ENCODE measurements at regions of chr10 and their contacts with region 1.

Region 1: DNA sequence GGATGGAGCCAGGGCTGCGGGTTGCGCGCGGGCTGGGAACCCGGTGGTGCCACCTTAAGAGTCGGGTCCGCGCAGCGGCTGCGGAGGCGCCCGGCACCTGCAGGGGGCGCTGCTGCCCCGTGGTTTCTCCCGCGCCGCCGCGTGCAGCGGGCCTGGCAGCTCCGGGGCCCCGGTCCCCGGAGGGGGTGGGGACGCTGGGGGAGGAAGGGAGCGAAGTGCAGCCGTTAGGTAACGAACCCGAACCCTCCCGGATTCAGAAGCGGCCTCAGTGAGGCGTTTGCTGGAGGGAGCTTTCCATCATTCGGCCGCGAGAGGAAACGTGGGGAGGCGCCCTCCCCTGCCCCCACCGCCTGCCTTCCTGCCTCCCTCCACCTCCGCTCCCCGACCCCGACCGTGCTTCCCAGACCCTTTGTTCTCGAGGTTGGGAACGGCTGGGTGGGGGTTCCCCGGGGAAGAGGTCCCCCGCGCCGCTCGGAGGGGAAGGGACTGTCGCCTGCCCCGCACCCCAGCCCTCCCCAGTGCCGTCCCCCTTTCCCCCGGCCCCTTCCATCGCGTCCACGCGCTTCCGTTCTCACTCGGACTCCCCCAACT is 29.6 kb downstream of the SKIDA1 start:
- DNase-seq: peak; percentile 80 to 93
- H3K4me3 ChIP-seq: peak overlapping the region; percentile 72
- H3K4me1 ChIP-seq: peaks cover 5% of the 10 kb centered on the region
- H3K27me3 ChIP-seq: no peaks in the 10 kb centered on the region; the same call in 1 of the 2 replicates

Region 2: DNA sequence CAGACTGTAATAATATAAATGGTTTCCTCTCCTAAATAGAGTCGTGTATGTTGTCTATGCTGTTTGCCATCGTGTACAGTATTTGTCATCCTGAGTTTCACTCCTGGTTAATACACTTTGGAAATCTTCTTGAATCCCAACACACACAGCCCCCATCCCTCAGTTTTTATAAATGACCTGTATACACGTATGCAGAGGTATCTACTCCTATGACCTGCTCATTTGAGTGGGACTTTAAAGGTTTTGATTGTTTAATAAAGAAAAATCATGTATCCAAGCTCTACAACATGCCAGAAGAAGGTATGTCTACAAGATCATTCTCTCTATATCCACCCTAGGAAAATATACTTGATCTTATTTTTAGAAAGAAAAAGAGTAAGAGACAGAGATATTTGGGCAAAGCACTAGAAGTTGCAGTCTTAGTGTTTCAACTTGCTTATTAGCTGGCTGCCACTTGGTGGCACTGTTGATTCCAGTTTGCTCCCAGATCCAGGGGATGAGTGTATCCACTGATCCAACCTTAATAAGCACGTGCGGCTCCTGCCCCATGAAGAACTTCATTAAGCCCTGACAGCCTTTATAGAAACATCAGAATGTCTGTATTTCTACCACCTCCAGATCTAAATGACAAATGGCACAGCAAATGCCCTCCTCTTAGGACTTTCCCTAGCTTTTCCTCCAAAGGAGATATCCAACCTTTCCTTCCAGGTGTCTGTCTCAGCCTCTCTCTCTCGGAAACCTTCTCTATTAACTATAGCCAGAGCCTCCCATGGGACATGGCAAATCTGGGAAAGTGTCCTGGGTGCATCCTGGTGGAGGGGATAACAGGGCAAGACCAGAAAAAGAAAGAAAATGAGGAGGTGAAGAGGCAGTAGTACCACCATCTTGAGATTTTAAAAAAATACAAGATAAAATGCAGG is 417.2 kb before region 1 on chr10:
- in situ Hi-C with region 1: loop called (anchors 25 kb)
- DNase-seq: peak; percentile 57 to 80
- H3K4me3 ChIP-seq: no peak overlapping the region
- H3K4me1 ChIP-seq: no peaks in the 10 kb centered on the region
- H3K27me3 ChIP-seq: peaks cover 5% of the 10 kb centered on the region; the same call in 1 of the 2 replicates

Region 3: DNA sequence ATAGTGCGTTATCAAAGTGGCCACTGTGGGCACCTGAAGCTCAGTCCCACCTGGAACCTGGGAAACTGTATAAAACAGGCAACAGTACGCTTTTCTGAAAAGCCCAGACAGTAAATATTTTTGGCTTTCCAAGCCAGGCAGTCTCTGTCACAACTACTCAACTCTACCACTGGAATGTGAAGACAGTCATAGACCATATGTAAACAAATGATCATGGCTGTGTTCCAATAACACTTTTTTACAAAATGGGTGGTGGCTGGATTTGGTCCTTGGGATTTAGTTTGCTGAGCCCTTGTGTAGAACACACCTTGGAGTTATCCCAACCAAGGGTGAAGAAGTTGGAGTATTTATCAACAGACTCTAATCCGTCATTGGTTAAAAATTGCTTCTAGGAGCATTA is 230.2 kb before region 1 on chr10:
- in situ Hi-C with region 1: no loop called
- DNase-seq: no peak
- H3K4me3 ChIP-seq: no peak overlapping the region
- H3K4me1 ChIP-seq: no peaks in the 10 kb centered on the region
- H3K27me3 ChIP-seq: no peaks in the 10 kb centered on the region

Region 4: GRCh38 chr10:21372651-21373410 is 123.0 kb before region 1 on chr10:
- in situ Hi-C with region 1: no loop called
- DNase-seq: peak; percentile 83 to 91
- H3K4me3 ChIP-seq: no peak overlapping the region
- H3K4me1 ChIP-seq: peaks cover 13% of the 10 kb centered on the region
- H3K27me3 ChIP-seq: no peaks in the 10 kb centered on the region

Region 5: GRCh38 chr10:21953585-21954057 is 457.8 kb after region 1 on chr10:
- in situ Hi-C with region 1: loop called (anchors 25 kb)
- DNase-seq: peak in 1 of 2 experiments; percentile 88
- H3K4me3 ChIP-seq: no peak overlapping the region
- H3K4me1 ChIP-seq: no peaks in the 10 kb centered on the region
- H3K27me3 ChIP-seq: no peaks in the 10 kb centered on the region

Measured in HAP-1 (cell line).